ENCODE measurements at regions of chr4 and their contacts with region 1.

Region 1: DNA sequence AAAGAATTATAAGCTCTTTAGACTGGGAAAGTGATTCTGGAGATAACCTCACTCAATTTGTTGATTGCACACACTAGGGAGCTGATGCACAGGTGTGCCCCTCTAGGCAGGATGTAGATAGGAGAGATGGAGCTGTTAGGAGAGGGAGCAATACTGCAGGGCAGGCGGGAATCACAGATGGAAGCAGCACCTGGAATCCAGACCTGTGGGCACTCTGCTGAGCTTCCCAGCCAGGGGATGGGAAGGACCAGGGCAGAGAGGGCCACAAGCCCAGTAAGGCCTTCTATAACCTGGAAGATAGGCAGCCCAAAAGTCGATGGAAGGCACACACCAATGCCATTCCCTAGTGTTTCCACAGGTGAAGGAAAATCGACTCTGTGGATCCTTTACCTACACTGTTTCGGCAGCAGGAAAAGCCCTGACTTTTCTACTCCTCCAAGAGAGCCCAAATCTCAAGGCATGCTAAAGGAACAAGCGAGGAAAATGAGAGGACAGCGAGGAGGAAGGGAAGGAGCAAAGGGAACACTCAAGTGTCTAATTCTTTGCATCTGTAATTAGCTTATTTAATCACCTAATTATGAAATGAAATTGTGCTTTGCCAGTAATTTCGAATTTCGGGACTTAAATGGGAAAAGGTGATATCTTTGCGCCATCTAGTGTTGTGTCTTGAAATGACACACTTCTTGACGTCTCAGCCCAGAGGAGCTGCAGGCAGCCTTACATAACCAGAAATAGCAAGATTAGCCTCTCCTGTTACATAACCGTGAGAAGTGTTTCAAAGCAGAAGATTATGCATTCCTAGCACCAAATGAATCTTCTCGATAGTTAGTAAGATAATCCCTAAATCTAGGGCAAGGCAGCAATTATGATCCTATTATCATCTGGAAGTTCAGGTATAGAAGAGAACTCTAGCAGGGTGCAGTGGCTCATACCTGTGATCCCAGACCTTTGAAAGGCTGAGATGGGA is 31.0 kb upstream of the TLR3 start:
- DNase-seq: peak in 1 of 2 donors; percentile 36
- H3K4me3 ChIP-seq: no peak overlapping the region
- H3K27ac ChIP-seq: no peak overlapping the region
- H3K4me1 ChIP-seq: no peaks in the 10 kb centered on the region
- H3K27me3 ChIP-seq: peaks cover 0 to 3% of the 10 kb centered on the region in 2 donors
- CTCF ChIP-seq: peak; percentile 82 to 90 (median 89)
- POLR2A ChIP-seq: no peak

Region 2: DNA sequence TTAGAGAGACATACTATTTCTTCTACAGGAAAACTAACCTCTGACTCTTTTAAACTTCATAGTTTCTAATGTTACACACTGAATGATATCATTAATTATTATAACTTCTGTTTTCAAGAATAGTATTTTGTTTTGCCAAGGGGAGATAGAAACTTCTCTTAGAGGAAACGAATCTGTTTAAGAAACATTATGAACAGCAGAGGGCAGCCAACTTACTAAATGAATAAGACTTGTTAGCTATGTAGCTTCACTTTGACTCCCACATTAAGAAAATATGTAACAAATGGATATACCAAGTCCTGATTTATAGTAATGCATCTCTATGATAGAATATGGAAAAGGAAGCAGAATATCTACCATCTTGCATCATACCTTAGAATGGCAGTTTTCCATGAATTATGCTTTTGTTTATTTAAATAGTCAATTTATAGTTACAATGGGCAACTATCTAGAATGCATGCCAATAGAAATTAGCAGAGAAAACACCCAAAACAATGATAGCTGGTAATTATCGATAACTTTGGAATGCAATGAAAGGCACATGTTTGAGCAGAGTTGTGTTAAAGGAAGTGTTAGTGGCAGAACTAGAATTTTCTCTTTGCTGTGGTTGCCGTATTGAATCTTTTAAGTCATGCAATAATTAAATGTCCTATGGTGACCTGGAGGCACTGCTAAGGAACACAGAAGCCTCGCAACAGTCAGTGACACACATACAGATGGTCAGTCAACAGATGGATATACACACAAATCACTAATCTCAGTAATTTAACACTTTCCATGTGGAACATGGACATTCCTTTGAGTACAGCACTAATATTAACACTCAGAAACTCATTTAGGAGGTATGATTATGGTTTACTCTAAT is 396.9 kb before region 1 on chr4:
- intact Hi-C with region 1: loop called (anchors 10 kb)
- DNase-seq: no peak
- H3K4me3 ChIP-seq: no peak overlapping the region
- H3K27ac ChIP-seq: no peak overlapping the region
- H3K4me1 ChIP-seq: no peaks in the 10 kb centered on the region
- H3K27me3 ChIP-seq: no peaks in the 10 kb centered on the region
- CTCF ChIP-seq: peak; percentile 21 to 64 (median 53)
- POLR2A ChIP-seq: no peak

Region 3: GRCh38 chr4:186058253-186058979 is 20.4 kb after region 1 on chr4:
- intact Hi-C with region 1: no loop called
- DNase-seq: no peak
- H3K4me3 ChIP-seq: no peak overlapping the region
- H3K27ac ChIP-seq: no peak overlapping the region
- H3K4me1 ChIP-seq: no peaks in the 10 kb centered on the region
- H3K27me3 ChIP-seq: no peaks in the 10 kb centered on the region
- CTCF ChIP-seq: no peak
- POLR2A ChIP-seq: no peak